ENCODE measurements at regions of chr14 and their contacts with region 1.

Region 1: GRCh38 chr14:74362361-74362915 is 14.2 kb downstream of the VRTN start:
- DNase-seq: peak; percentile 58
- H3K4me3 ChIP-seq: no peak overlapping the region
- H3K27ac ChIP-seq: no peak overlapping the region
- H3K4me1 ChIP-seq: no peaks in the 10 kb centered on the region
- H3K27me3 ChIP-seq: no peaks in the 10 kb centered on the region
- CTCF ChIP-seq: peak; percentile 98

Region 2: GRCh38 chr14:74414403-74415114 is 52.1 kb after region 1 on chr14:
- CTCF ChIA-PET with region 1: no interaction called
- dilution Hi-C with region 1: loop called (anchors 5 kb)
- in situ Hi-C with region 1: no loop called
- intact Hi-C with region 1: no loop called
- DNase-seq: no peak
- H3K4me3 ChIP-seq: no peak overlapping the region
- H3K27ac ChIP-seq: no peak overlapping the region
- H3K4me1 ChIP-seq: no peaks in the 10 kb centered on the region
- H3K27me3 ChIP-seq: peaks cover 3% of the 10 kb centered on the region
- CTCF ChIP-seq: no peak

Region 3: DNA sequence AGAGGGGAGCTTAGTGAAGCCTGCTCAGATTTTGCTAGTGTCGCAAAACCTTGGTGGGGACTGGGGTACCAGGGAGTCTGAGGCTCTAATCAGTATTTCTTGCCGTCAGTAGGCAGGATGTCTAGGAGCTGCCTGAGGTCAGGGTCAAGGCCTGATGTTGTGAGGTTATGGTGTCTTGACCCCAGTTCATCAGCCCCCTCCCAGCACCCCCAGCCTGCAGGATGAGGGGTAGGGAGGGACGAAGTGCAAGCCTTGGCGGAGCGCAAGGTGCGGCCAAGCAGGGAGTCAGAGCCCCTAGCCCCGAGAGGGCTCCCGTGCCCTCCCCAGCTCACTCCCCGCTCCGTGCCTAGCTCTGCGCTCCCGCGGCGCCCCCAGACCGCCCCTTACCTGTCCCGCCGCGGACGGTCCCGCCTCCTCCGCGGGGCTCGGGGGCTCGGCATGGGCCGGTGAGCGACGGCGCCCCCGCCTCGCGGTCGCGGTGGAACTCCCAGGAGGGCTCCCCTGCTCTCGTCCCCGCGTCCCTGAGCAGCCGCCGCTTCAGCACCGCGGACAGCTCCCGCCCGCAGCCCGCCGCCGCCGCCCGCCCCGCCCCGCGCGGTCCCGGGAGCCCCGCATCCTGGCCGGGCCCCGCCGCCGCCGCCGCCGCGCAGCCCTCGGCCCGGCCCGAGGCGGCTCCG is 63.2 kb after region 1 on chr14:
- CTCF ChIA-PET with region 1: no interaction called
- dilution Hi-C with region 1: no loop called
- in situ Hi-C with region 1: no loop called
- intact Hi-C with region 1: no loop called
- DNase-seq: no peak
- H3K4me3 ChIP-seq: no peak overlapping the region
- H3K27ac ChIP-seq: no peak overlapping the region
- H3K4me1 ChIP-seq: no peaks in the 10 kb centered on the region
- H3K27me3 ChIP-seq: no peaks in the 10 kb centered on the region
- CTCF ChIP-seq: no peak

Region 4: DNA sequence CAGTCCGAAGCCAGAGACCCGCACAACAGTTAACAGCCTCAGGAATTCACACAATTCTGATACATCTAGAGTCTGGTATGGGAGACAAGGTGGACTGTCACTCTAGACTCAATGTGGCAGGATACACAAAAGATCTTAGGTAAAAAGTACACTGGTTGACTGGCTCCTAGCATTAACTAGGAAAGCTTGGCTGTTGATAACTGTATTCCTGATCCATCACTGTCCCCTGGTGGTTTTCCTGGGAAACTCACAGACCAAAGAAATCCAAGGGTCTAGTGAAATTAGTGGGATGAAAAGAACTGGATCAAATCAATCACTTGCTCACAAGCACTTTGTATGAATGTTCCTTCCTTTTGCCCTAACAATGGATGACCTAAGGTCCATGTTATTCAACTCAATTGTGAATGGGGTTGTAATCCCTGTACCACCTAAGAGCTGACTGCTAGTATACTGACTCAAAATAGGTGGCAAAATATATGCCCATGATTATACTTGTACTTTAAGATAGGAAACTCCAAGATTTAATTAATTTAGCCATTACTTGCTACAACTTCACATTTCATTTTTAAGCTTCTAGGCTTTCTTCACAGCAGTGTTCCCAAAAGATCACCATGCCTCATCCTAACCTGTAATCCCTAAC is 116.7 kb after region 1 on chr14:
- CTCF ChIA-PET with region 1: no interaction called
- dilution Hi-C with region 1: no loop called
- in situ Hi-C with region 1: no loop called
- intact Hi-C with region 1: loop called (anchors 1 kb)
- DNase-seq: no peak
- H3K4me3 ChIP-seq: no peak overlapping the region
- H3K27ac ChIP-seq: no peak overlapping the region
- H3K4me1 ChIP-seq: peaks cover 8% of the 10 kb centered on the region
- H3K27me3 ChIP-seq: no peaks in the 10 kb centered on the region
- CTCF ChIP-seq: peak; percentile 47 to 67

Region 5: GRCh38 chr14:74493343-74494261 is 131.2 kb after region 1 on chr14 and contains the start of gene ISCA2:
- CTCF ChIA-PET with region 1: no interaction called
- dilution Hi-C with region 1: no loop called
- in situ Hi-C with region 1: loop called in 1 of 2 experiments (anchors 5 kb)
- intact Hi-C with region 1: loop called (anchors 1 kb)
- DNase-seq: peak; percentile 99
- H3K4me3 ChIP-seq: peak within 1 kb of the TSS; percentile 76 to 96 (median 80)
- H3K27ac ChIP-seq: peak within 1 kb of the TSS; percentile 71
- H3K4me1 ChIP-seq: peaks cover 37% of the 10 kb centered on the region
- H3K27me3 ChIP-seq: no peaks in the 10 kb centered on the region
- CTCF ChIP-seq: no peak
- total RNA-seq, gene ISCA2: 6.7 to 18.2 TPM

Region 6: GRCh38 chr14:74531467-74531866 is 169.0 kb after region 1 on chr14:
- CTCF ChIA-PET with region 1: no interaction called
- dilution Hi-C with region 1: no loop called
- in situ Hi-C with region 1: no loop called
- intact Hi-C with region 1: loop called (anchors 5 kb)
- DNase-seq: peak; percentile 65
- H3K4me3 ChIP-seq: no peak overlapping the region
- H3K27ac ChIP-seq: no peak overlapping the region
- H3K4me1 ChIP-seq: peaks cover 21% of the 10 kb centered on the region
- H3K27me3 ChIP-seq: no peaks in the 10 kb centered on the region
- CTCF ChIP-seq: peak; percentile 5 to 43

Region 7: DNA sequence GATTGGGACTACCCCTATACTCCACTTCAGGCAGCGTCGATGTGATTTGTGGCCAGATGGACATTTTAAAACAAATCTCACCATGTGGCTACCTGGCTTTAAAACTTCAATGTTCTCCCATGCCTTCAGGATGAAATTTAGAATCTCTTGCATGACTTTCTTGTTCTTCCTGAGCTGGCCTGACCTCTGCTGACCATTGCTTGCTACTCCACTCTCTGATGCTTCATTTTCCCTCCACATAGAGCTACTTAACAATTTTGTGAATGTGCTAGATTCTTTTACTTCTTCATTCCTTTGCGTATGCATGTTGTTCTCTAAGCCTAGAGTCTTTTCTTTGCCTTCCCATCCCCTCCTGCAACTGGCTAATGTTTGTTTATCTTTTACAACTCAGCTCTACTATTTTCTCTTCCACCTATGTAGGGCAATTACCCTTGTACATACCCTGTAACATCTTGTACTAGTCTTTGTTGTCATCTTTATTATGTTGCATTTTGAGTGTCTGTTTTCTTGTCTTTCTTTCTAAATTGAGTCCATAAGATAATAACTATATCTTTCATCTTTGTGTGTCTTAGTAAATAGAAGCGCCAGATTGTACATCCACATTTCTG is 441.9 kb after region 1 on chr14:
- CTCF ChIA-PET with region 1: no interaction called
- dilution Hi-C with region 1: no loop called
- in situ Hi-C with region 1: no loop called
- intact Hi-C with region 1: loop called (anchors 1 kb)
- DNase-seq: peak; percentile 33
- H3K4me3 ChIP-seq: no peak overlapping the region
- H3K27ac ChIP-seq: no peak overlapping the region
- H3K4me1 ChIP-seq: no peaks in the 10 kb centered on the region
- H3K27me3 ChIP-seq: no peaks in the 10 kb centered on the region
- CTCF ChIP-seq: peak; percentile 33 to 51

Region 8: GRCh38 chr14:74905375-74906142 is 543.1 kb after region 1 on chr14:
- CTCF ChIA-PET with region 1: no interaction called
- dilution Hi-C with region 1: no loop called
- in situ Hi-C with region 1: no loop called
- intact Hi-C with region 1: loop called (anchors 5 kb)
- DNase-seq: peak; percentile 20
- H3K4me3 ChIP-seq: no peak overlapping the region
- H3K27ac ChIP-seq: no peak overlapping the region
- H3K4me1 ChIP-seq: no peaks in the 10 kb centered on the region
- H3K27me3 ChIP-seq: no peaks in the 10 kb centered on the region
- CTCF ChIP-seq: peak; percentile 88 to 96